Gastrocnemius medialis (tissue), 4 donors: ENCODE measurements at regions of chr10 and their contacts with region 1.

Region 1: GRCh38 chr10:21078410-21079329 is 181.6 kb upstream of the NEBL start:
- DNase-seq: peak in 1 of 2 donors; percentile 27
- ATAC-seq: peak; percentile 49 to 75
- H3K4me3 ChIP-seq: no peak overlapping the region
- H3K27ac ChIP-seq: no peak overlapping the region
- H3K4me1 ChIP-seq: no peaks in the 10 kb centered on the region
- H3K27me3 ChIP-seq: no peaks in the 10 kb centered on the region
- CTCF ChIP-seq: peak; percentile 17 to 62 (median 45)
- POLR2A ChIP-seq: no peak

Region 2: GRCh38 chr10:21020545-21020944 is 58.1 kb before region 1 on chr10:
- in situ Hi-C with region 1: no loop called
- intact Hi-C with region 1: no loop called
- DNase-seq: no peak
- ATAC-seq: no peak
- H3K4me3 ChIP-seq: no peak overlapping the region
- H3K27ac ChIP-seq: no peak overlapping the region
- H3K4me1 ChIP-seq: no peaks in the 10 kb centered on the region
- H3K27me3 ChIP-seq: no peaks in the 10 kb centered on the region
- CTCF ChIP-seq: no peak
- POLR2A ChIP-seq: no peak

Region 3: DNA sequence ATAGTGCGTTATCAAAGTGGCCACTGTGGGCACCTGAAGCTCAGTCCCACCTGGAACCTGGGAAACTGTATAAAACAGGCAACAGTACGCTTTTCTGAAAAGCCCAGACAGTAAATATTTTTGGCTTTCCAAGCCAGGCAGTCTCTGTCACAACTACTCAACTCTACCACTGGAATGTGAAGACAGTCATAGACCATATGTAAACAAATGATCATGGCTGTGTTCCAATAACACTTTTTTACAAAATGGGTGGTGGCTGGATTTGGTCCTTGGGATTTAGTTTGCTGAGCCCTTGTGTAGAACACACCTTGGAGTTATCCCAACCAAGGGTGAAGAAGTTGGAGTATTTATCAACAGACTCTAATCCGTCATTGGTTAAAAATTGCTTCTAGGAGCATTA is 187.0 kb after region 1 on chr10:
- in situ Hi-C with region 1: loop called in 2 of 4 experiments (anchors 5 kb)
- intact Hi-C with region 1: loop called (anchors 1 kb)
- DNase-seq: no peak
- ATAC-seq: no peak
- H3K4me3 ChIP-seq: no peak overlapping the region
- H3K27ac ChIP-seq: no peak overlapping the region
- H3K4me1 ChIP-seq: no peaks in the 10 kb centered on the region
- H3K27me3 ChIP-seq: no peaks in the 10 kb centered on the region
- CTCF ChIP-seq: no peak
- POLR2A ChIP-seq: no peak

Region 4: GRCh38 chr10:21273400-21273932 is 194.8 kb after region 1 on chr10:
- in situ Hi-C with region 1: loop called in 2 of 4 experiments (anchors 5 kb)
- intact Hi-C with region 1: loop called (anchors 1 kb)
- DNase-seq: no peak
- ATAC-seq: no peak
- H3K4me3 ChIP-seq: no peak overlapping the region
- H3K27ac ChIP-seq: no peak overlapping the region
- H3K4me1 ChIP-seq: no peaks in the 10 kb centered on the region
- H3K27me3 ChIP-seq: no peaks in the 10 kb centered on the region
- CTCF ChIP-seq: no peak
- POLR2A ChIP-seq: no peak

Region 5: DNA sequence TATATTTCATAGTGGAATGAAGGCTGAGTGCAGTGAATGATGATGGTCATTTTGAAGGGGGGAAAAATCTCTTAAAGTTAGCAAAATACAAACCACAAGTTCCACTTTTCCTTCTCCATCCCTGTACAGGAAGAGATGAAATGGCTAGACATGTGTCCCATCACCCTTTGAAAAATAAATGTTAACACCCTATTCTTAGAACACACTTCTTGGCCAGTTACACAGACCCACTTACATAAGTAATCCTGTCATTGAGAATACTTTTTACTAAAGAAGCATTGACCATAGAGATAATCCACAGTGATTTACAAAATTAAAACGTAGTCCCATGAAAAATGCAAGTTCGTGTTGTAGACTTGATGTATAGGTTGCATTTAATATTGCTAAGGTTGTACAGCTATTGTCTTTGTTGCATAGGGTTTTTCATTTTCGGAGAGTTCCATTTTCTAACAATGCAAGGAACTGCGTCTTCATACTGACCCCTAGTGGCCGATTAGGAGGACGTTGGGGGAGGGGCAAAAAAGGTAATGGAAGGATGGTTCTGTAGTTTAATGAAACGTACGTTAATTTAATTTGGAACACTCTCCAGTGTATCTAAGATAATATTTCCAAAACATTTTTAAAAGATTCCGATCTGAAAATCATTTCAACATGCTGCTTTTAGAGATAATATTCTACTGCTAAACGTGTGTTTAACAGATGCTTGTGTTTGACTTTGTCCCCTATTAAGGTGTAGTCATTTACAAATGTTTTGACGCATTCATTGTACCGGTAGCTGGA is 1910.1 kb after region 1 on chr10:
- in situ Hi-C with region 1: no loop called
- intact Hi-C with region 1: loop called (anchors 5 kb)
- DNase-seq: peak; percentile 32 to 35
- ATAC-seq: peak; percentile 71 to 77
- H3K4me3 ChIP-seq: no peak overlapping the region
- H3K27ac ChIP-seq: no peak overlapping the region
- H3K4me1 ChIP-seq: peaks cover 0 to 4% of the 10 kb centered on the region in 2 donors
- H3K27me3 ChIP-seq: no peaks in the 10 kb centered on the region
- CTCF ChIP-seq: peak; percentile 78 to 90 (median 85)
- POLR2A ChIP-seq: no peak